Panc1 (cell line): ENCODE measurements at regions of chr4 and their contacts with region 1.

Region 1: GRCh38 chr4:6087673-6088341 is 69.6 kb upstream of the C4orf50 start:
- DNase-seq: no peak
- ATAC-seq: peak; percentile 80
- H3K4me3 ChIP-seq: no peak overlapping the region
- H3K27ac ChIP-seq: no peak overlapping the region
- H3K4me1 ChIP-seq: no peaks in the 10 kb centered on the region
- H3K27me3 ChIP-seq: no peaks in the 10 kb centered on the region
- CTCF ChIP-seq: peak; percentile 75

Region 2: GRCh38 chr4:5998333-5998936 is 89.4 kb before region 1 on chr4:
- CTCF ChIA-PET with region 1: interaction called, 4 read pairs
- POLR2A ChIA-PET with region 1: no interaction called
- in situ Hi-C with region 1: no loop called
- intact Hi-C with region 1: loop called (anchors 1 kb)
- DNase-seq: peak; percentile 41
- ATAC-seq: peak; percentile 93
- H3K4me3 ChIP-seq: no peak overlapping the region
- H3K27ac ChIP-seq: no peak overlapping the region
- H3K4me1 ChIP-seq: no peaks in the 10 kb centered on the region
- H3K27me3 ChIP-seq: no peaks in the 10 kb centered on the region
- CTCF ChIP-seq: peak; percentile 94